Heart right ventricle (tissue), 16 donors: ENCODE measurements at regions of chr6 and their contacts with region 1.

Region 1: DNA sequence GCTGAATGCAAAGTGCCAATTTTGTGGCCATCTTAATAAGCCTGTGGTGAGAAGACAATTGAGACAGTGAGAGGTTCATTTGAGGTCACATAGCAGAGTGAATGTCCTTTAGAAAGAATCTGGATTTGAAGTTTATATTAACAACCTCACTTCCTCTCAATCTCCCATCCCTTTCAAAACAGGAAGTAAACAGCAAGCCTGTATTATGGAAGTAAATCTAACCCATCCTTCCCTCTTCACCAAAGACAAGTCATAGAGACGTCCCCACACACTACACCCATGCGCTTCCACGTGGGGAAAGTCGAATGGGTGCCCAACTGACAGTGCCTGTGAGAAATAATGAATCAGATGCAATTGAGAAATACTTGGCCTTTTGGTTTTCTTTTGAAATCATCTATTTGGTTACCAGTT is 28.8 kb upstream of the CCND3 start:
- DNase-seq: no peak
- ATAC-seq: peak in 4 of 8 donors; percentile 47 to 83 (median 60)
- H3K4me3 ChIP-seq: no peak overlapping the region
- H3K27ac ChIP-seq: peak overlapping the region in 4 of 10 donors; percentile 9 to 68 (median 32)
- H3K4me1 ChIP-seq: peaks cover 0 to 40% (median 10%) of the 10 kb centered on the region in 9 donors
- H3K27me3 ChIP-seq: no peaks in the 10 kb centered on the region
- CTCF ChIP-seq: no peak

Region 2: DNA sequence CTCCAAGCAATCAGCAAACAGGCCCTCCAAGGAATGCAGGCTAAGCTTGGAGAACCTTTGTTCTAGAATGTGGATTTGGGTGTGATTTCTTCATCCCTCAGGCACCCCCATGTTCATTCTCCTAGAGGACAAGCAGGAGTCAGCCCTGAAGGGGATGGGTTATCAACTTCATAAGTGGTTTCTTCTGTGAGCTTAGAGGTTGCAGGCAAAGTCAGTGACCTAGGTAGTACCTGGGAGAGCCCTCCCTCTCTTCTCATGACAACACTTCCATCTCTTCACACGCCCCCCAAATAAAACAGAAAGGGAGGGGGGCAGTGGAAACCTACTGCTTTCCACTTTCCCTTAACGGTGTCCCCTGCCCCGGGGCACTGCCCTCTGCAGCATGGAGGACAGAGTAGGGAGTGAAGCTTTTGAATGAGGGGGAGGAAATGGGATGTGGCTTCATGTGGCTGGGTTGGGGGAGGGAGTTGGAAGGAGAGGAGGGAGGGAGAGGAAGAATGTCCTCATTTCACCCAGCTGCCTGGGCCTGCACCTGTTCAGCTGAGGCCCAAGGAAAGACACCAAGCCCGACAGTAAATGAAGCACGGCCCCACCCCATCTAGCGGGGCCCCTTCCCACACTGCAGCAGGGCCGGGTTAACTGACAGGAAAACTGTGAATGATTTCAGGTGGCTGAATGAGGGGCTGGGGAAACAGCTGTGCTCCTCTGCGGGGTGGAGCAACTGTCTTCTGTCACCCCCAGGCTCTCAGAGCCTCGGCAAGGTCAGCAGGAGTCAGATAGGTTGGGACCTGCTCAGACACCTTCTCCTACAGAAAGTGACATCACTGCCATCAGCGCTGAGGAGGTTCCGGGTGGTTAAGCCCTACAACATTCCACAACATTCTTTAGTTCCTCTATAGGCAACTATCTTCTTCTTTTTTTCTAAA is 39.8 kb after region 1 on chr6:
- intact Hi-C with region 1: loop called in 1 of 10 experiments (anchors 5 kb)
- DNase-seq: no peak
- ATAC-seq: peak in 6 of 8 donors; percentile 52 to 81 (median 66)
- H3K4me3 ChIP-seq: peak overlapping the region in 1 of 10 donors; percentile 16
- H3K27ac ChIP-seq: peak overlapping the region in 4 of 10 donors; percentile 22 to 72 (median 46)
- H3K4me1 ChIP-seq: peaks cover 0 to 41% (median 16%) of the 10 kb centered on the region in 9 donors
- H3K27me3 ChIP-seq: no peaks in the 10 kb centered on the region
- CTCF ChIP-seq: peak in 1 of 9 donors; percentile 4